Natural killer cell (primary cell): ENCODE measurements at regions of chr1 and their contacts with region 1.

Region 1: GRCh38 chr1:248825909-248826760 is at the start of gene SH3BP5L:
- DNase-seq: peak; percentile 87 to 96
- ATAC-seq: peak; percentile 85 to 95 (median 87)
- H3K4me3 ChIP-seq: peak within 1 kb of the TSS; percentile 93
- H3K4me3 Mint-ChIP-seq: peak within 1 kb of the TSS; percentile 96
- H3K27ac ChIP-seq: peak within 1 kb of the TSS; percentile 99
- H3K27ac Mint-ChIP-seq: peak within 1 kb of the TSS; percentile 96
- H3K4me1 ChIP-seq: peaks cover 46% of the 10 kb centered on the region
- H3K4me1 Mint-ChIP-seq: peaks cover 55 to 56% of the 10 kb centered on the region in 2 donors
- H3K27me3 ChIP-seq: no peaks in the 10 kb centered on the region
- H3K27me3 Mint-ChIP-seq: no peaks in the 10 kb centered on the region
- CTCF ChIP-seq: peak; percentile 79
- total RNA-seq, gene SH3BP5L: 19.0 to 27.5 (median 22.9) TPM

Region 2: DNA sequence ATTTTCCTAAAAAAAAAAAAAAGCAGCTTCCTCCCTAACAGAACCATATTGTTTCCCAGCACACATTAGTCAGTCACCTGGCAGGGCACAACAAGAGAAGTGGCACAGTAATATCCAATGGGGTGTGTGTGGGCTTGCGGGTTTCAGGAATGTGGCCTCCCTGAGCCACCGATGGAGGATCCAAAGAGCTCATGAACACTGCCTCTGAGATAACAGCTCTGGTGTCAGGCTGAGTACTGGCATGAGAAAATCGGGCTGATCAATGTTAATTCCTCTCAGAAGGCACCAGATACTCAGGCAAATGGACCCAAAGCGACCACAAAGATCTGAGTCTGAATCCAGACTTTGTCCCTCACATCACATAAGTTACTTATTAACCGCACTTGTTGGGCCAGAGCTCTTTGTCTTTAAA is 68.3 kb before region 1 on chr1:
- intact Hi-C with region 1: no loop called
- DNase-seq: no peak
- ATAC-seq: no peak
- H3K4me3 ChIP-seq: no peak overlapping the region
- H3K4me3 Mint-ChIP-seq: no peak overlapping the region
- H3K27ac ChIP-seq: no peak overlapping the region
- H3K27ac Mint-ChIP-seq: no peak overlapping the region
- H3K4me1 ChIP-seq: peaks cover 3% of the 10 kb centered on the region
- H3K4me1 Mint-ChIP-seq: no peaks in the 10 kb centered on the region
- H3K27me3 ChIP-seq: no peaks in the 10 kb centered on the region
- H3K27me3 Mint-ChIP-seq: peaks cover 0 to 3% of the 10 kb centered on the region in 2 donors
- CTCF ChIP-seq: no peak

Region 3: GRCh38 chr1:248906009-248906752 is 80.0 kb after region 1 on chr1 and contains the start of gene PGBD2:
- intact Hi-C with region 1: loop called (anchors 1 kb)
- DNase-seq: peak; percentile 92 to 96
- ATAC-seq: peak; percentile 82 to 90 (median 84)
- H3K4me3 ChIP-seq: peak within 1 kb of the TSS; percentile 70
- H3K4me3 Mint-ChIP-seq: peak within 1 kb of the TSS; percentile 94
- H3K27ac ChIP-seq: peak within 1 kb of the TSS; percentile 90
- H3K27ac Mint-ChIP-seq: peak within 1 kb of the TSS; percentile 92 to 93
- H3K4me1 ChIP-seq: peaks cover 14% of the 10 kb centered on the region
- H3K4me1 Mint-ChIP-seq: peaks cover 30 to 33% of the 10 kb centered on the region in 2 donors
- H3K27me3 ChIP-seq: no peaks in the 10 kb centered on the region
- H3K27me3 Mint-ChIP-seq: peaks cover 5 to 12% of the 10 kb centered on the region in 2 donors
- CTCF ChIP-seq: peak; percentile 56
- total RNA-seq, gene PGBD2: 3.1 to 9.2 (median 6.2) TPM